Adrenal gland (tissue), 19 donors: ENCODE measurements at regions of chr12 and their contacts with region 1.

Region 1: GRCh38 chr12:119780786-119781434 is 96.2 kb downstream of the CIT start:
- DNase-seq: peak; percentile 42 to 83 (median 69)
- H3K4me3 ChIP-seq: no peak overlapping the region
- H3K27ac ChIP-seq: peak overlapping the region in 2 of 5 donors; percentile 6 to 17
- H3K4me1 ChIP-seq: peaks cover 0 to 8% of the 10 kb centered on the region in 2 donors
- H3K27me3 ChIP-seq: no peaks in the 10 kb centered on the region
- CTCF ChIP-seq: peak; percentile 68 to 90 (median 83)
- POLR2A ChIP-seq: no peak

Region 2: GRCh38 chr12:119695034-119695433 is 85.9 kb before region 1 on chr12:
- intact Hi-C with region 1: loop called in 1 of 2 experiments (anchors 10 kb)
- DNase-seq: peak in 1 of 7 donors; percentile 32
- H3K4me3 ChIP-seq: no peak overlapping the region
- H3K27ac ChIP-seq: peak overlapping the region in 3 of 5 donors; percentile 8 to 83 (median 10)
- H3K4me1 ChIP-seq: peaks cover 28 to 48% of the 10 kb centered on the region in 2 donors
- H3K27me3 ChIP-seq: no peaks in the 10 kb centered on the region
- CTCF ChIP-seq: peak; percentile 30 to 49 (median 46)
- POLR2A ChIP-seq: no peak

Region 3: DNA sequence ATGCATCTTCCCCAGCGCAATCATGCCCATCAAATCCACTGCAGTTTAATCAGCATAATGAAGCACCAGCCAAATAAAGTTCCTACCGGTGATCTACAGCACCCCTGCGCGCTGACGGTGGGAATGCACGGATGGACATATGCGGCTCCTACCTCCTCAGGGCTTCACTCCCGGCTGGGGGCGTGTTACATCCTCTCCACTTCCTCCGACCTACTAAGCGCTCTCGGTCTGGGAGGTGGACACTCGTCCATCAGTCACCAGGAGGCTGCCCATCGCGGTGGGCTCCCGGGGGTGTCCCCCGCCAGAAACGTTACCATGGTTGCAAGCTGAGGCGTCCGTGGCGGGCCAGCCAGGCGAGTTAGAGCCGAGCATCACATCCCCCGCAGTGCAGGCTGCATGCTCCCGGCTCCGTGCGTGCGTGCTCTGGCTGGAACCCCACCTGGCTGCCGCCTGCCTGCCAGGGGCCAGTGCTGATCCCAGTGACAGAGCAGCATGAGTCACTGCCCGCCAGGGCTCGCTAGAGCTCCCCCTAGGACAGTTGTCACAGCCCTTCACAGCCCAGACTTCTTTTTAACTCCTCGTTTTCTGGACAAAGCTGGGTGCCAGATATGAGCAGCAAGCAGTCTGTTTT is 23.2 kb after region 1 on chr12:
- intact Hi-C with region 1: no loop called
- DNase-seq: peak; percentile 79 to 89 (median 87)
- H3K4me3 ChIP-seq: peak overlapping the region in 1 of 4 donors; percentile 48
- H3K27ac ChIP-seq: peak overlapping the region in 1 of 5 donors; percentile 61
- H3K4me1 ChIP-seq: peaks cover 0 to 16% of the 10 kb centered on the region in 2 donors
- H3K27me3 ChIP-seq: no peaks in the 10 kb centered on the region
- CTCF ChIP-seq: peak; percentile 23 to 41 (median 33)
- POLR2A ChIP-seq: peak in 1 of 2 donors; percentile 52